ENCODE measurements at regions of chr19 and their contacts with region 1.

Region 1: GRCh38 chr19:39512988-39513387 is 2.0 kb upstream of the SELENOV start:
- DNase-seq: no peak
- ATAC-seq: no peak
- H3K4me3 ChIP-seq: no peak overlapping the region
- H3K4me3 Mint-ChIP-seq: no peak overlapping the region
- H3K27ac ChIP-seq: no peak overlapping the region
- H3K27ac Mint-ChIP-seq: no peak overlapping the region
- H3K4me1 ChIP-seq: peaks cover 20 to 26% of the 10 kb centered on the region in 2 donors
- H3K4me1 Mint-ChIP-seq: peaks cover 17% of the 10 kb centered on the region
- H3K27me3 ChIP-seq: peaks cover 0 to 53% (median 33%) of the 10 kb centered on the region in 4 experiments
- H3K27me3 Mint-ChIP-seq: peaks cover 30% of the 10 kb centered on the region
- CTCF ChIP-seq: no peak

Region 2: DNA sequence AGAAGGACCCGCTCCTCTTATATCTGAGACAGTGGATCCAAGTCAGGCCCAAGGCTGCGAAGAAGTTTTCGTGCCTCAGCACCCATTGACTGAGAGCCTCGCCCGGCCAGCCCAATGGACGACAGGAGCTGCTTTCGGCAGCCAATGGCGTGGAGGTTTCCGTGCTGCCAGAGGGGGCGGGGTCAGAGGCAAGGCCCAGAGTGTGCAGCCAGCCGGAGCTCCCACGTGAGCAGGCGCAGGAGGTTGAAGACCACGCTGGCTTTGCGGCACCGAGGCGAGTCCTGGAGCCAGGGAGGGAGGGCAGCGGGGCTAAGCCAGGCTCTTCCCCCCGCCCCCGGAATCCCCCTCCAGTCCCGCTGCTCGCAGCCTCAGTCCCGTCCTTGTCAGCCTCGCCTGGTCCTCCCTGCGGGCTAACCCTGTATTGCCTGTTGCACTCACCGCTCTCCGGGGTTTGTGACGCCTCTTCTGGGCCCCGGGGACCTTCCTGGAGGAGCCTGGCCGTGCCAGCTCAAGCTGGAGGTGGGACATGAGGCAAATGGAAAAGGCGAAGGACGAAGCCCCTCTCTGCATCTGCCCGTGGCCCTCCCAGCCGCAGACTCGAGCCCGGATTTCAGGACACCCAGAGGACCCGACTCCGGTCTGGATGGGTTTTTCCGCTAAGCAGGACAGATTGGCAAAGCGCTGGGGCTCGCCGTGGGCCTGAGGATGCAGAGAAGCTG is 265.9 kb before region 1 on chr19:
- CTCF ChIA-PET with region 1: no interaction called
- POLR2A ChIA-PET with region 1: no interaction called
- intact Hi-C with region 1: no loop called
- DNase-seq: no peak
- ATAC-seq: peak; percentile 58
- H3K4me3 ChIP-seq: peak overlapping the region in 3 of 5 experiments; percentile 7 to 23 (median 10)
- H3K4me3 Mint-ChIP-seq: peak overlapping the region; percentile 13
- H3K27ac ChIP-seq: no peak overlapping the region
- H3K27ac Mint-ChIP-seq: no peak overlapping the region
- H3K4me1 ChIP-seq: peaks cover 9 to 12% of the 10 kb centered on the region in 2 donors
- H3K4me1 Mint-ChIP-seq: no peaks in the 10 kb centered on the region
- H3K27me3 ChIP-seq: peaks cover 0 to 15% (median 3%) of the 10 kb centered on the region in 4 experiments
- H3K27me3 Mint-ChIP-seq: peaks cover 13% of the 10 kb centered on the region
- CTCF ChIP-seq: no peak

Region 3: GRCh38 chr19:39539519-39540332 is 26.7 kb after region 1 on chr19 and contains the start of gene EID2:
- CTCF ChIA-PET with region 1: no interaction called
- POLR2A ChIA-PET with region 1: interaction called, 12 read pairs
- intact Hi-C with region 1: no loop called
- DNase-seq: peak; percentile 96
- ATAC-seq: peak; percentile 94
- H3K4me3 ChIP-seq: peak within 1 kb of the TSS; percentile 66 to 97 (median 86)
- H3K4me3 Mint-ChIP-seq: peak within 1 kb of the TSS; percentile 98
- H3K27ac ChIP-seq: peak within 1 kb of the TSS; percentile 74 to 83
- H3K27ac Mint-ChIP-seq: peak within 1 kb of the TSS; percentile 93
- H3K4me1 ChIP-seq: peaks cover 21 to 26% of the 10 kb centered on the region in 2 donors
- H3K4me1 Mint-ChIP-seq: peaks cover 41% of the 10 kb centered on the region
- H3K27me3 ChIP-seq: no peaks in the 10 kb centered on the region
- H3K27me3 Mint-ChIP-seq: no peaks in the 10 kb centered on the region
- CTCF ChIP-seq: peak; percentile 80
- total RNA-seq, gene EID2: 13.8 and 14.1 TPM in 2 replicates

Region 4: GRCh38 chr19:39617745-39618144 is 104.8 kb after region 1 on chr19:
- CTCF ChIA-PET with region 1: no interaction called
- POLR2A ChIA-PET with region 1: no interaction called
- intact Hi-C with region 1: no loop called
- DNase-seq: no peak
- ATAC-seq: no peak
- H3K4me3 ChIP-seq: no peak overlapping the region
- H3K4me3 Mint-ChIP-seq: no peak overlapping the region
- H3K27ac ChIP-seq: no peak overlapping the region
- H3K27ac Mint-ChIP-seq: no peak overlapping the region
- H3K4me1 ChIP-seq: no peaks in the 10 kb centered on the region
- H3K4me1 Mint-ChIP-seq: no peaks in the 10 kb centered on the region
- H3K27me3 ChIP-seq: peaks cover 0 to 7% (median 3%) of the 10 kb centered on the region in 4 experiments
- H3K27me3 Mint-ChIP-seq: peaks cover 58% of the 10 kb centered on the region
- CTCF ChIP-seq: no peak

Region 5: GRCh38 chr19:39701291-39701690 is 188.3 kb after region 1 on chr19:
- CTCF ChIA-PET with region 1: no interaction called
- POLR2A ChIA-PET with region 1: no interaction called
- intact Hi-C with region 1: no loop called
- DNase-seq: no peak
- ATAC-seq: no peak
- H3K4me3 ChIP-seq: no peak overlapping the region
- H3K4me3 Mint-ChIP-seq: no peak overlapping the region
- H3K27ac ChIP-seq: no peak overlapping the region
- H3K27ac Mint-ChIP-seq: no peak overlapping the region
- H3K4me1 ChIP-seq: no peaks in the 10 kb centered on the region
- H3K4me1 Mint-ChIP-seq: no peaks in the 10 kb centered on the region
- H3K27me3 ChIP-seq: peaks cover 0 to 16% (median 7%) of the 10 kb centered on the region in 4 experiments
- H3K27me3 Mint-ChIP-seq: peaks cover 60% of the 10 kb centered on the region
- CTCF ChIP-seq: no peak

Measured in B cell (primary cell).